H1 (cell line): ENCODE measurements at regions of chr22 and their contacts with region 1.

Region 1: DNA sequence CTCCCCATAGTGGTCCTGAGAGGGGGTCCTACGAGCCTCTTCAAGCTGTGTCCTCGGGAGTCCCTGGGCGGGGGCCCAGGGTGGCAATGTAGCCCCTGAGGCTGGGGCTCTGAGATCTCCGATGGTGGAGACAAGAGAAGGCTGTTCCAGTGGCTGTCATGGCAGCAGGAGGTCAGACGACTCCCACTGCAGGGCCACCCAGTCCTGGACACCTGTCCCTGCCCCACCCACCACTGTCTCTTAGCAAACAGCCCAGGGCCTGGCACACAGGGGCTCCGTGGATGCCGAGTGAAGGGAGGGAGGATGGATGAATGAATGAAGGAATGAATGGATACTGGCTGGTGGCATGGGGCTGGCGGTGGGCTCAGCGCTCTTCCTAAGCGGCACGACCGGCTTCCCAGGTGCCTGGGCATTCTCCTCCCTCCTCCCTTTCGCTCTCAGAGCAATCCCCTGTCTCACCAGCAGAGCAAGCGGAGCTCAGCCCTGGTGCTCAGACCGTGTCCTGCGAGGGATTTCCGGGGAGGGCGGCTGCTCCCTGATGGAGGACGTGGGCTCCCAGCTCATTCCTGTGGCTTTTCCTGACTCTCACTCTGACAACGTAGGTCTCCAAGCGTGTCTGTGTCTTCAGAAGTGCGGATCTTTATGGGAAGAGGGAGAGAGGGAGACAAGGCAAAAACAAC is 1272.6 kb downstream of the BRD1 start:
- DNase-seq: peak in 1 of 2 experiments; percentile 63
- H3K4me3 ChIP-seq: no peak overlapping the region
- H3K27ac ChIP-seq: no peak overlapping the region
- H3K4me1 ChIP-seq: 0 out of 7 replicates have a peak, but pooled peaks cover 0 to 3% (median under 1%) of the 10 kb centered on the region in 4 experiments
- H3K27me3 ChIP-seq: no peaks in the 10 kb centered on the region
- CTCF ChIP-seq: peak; percentile 54 to 64 (median 60)
- EP300 ChIP-seq: no peak
- POLR2A ChIP-seq: no peak
- RAD21 ChIP-seq: peak; percentile 24 to 32; a peak in 3 of 4 replicates

Region 2: GRCh38 chr22:48566741-48567140 is 11.7 kb after region 1 on chr22:
- CTCF ChIA-PET with region 1: interaction called, 17 read pairs
- POLR2A ChIA-PET with region 1: no interaction called
- DNase-seq: no peak
- H3K4me3 ChIP-seq: no peak overlapping the region
- H3K27ac ChIP-seq: no peak overlapping the region
- H3K4me1 ChIP-seq: no peaks in the 10 kb centered on the region
- H3K27me3 ChIP-seq: no peaks in the 10 kb centered on the region
- CTCF ChIP-seq: no peak
- EP300 ChIP-seq: no peak
- POLR2A ChIP-seq: no peak
- RAD21 ChIP-seq: no peak

Region 3: GRCh38 chr22:48605856-48606481 is 50.9 kb after region 1 on chr22:
- CTCF ChIA-PET with region 1: no interaction called
- POLR2A ChIA-PET with region 1: no interaction called
- DNase-seq: no peak
- H3K4me3 ChIP-seq: no peak overlapping the region
- H3K27ac ChIP-seq: no peak overlapping the region
- H3K4me1 ChIP-seq: peaks cover 0 to 3% (median 0%) of the 10 kb centered on the region in 4 experiments; a peak in 3 of 7 replicates
- H3K27me3 ChIP-seq: no peaks in the 10 kb centered on the region; a peak in 1 of 7 replicates
- CTCF ChIP-seq: no peak
- EP300 ChIP-seq: no peak
- POLR2A ChIP-seq: no peak
- RAD21 ChIP-seq: no peak